Ovary (tissue), 10 donors: ENCODE measurements at regions of chr11 and their contacts with region 1.

Region 1: GRCh38 chr11:56799691-56800210 is 51.3 kb upstream of the OR9G4 start:
- DNase-seq: no peak
- H3K4me3 ChIP-seq: no peak overlapping the region
- H3K27ac ChIP-seq: no peak overlapping the region
- H3K4me1 ChIP-seq: no peaks in the 10 kb centered on the region
- H3K27me3 ChIP-seq: no peaks in the 10 kb centered on the region
- CTCF ChIP-seq: no peak
- EP300 ChIP-seq: no peak
- POLR2A ChIP-seq: no peak

Region 2: DNA sequence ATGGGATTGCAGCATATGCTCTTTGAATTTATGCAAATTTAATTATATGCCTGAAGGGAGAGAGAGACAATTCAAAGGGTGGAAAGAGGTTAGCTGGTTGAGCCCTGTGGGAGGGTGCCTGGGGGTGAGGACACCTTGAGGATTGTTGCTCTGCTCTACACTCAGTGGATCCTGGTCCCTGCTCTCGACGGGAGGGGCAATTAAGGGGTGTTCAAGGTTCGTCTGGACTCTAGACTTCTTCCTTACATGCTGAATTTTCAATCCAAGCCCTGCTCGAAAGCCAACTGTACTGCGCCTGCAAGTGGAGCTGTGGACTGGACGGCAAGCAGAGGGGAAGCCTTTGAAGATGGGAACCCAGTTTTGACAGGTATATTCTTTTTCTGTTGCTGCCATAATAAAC is 241.2 kb before region 1 on chr11:
- intact Hi-C with region 1: no loop called
- DNase-seq: no peak
- H3K4me3 ChIP-seq: no peak overlapping the region
- H3K27ac ChIP-seq: no peak overlapping the region
- H3K4me1 ChIP-seq: no peaks in the 10 kb centered on the region
- H3K27me3 ChIP-seq: no peaks in the 10 kb centered on the region
- CTCF ChIP-seq: no peak
- EP300 ChIP-seq: no peak
- POLR2A ChIP-seq: no peak

Region 3: DNA sequence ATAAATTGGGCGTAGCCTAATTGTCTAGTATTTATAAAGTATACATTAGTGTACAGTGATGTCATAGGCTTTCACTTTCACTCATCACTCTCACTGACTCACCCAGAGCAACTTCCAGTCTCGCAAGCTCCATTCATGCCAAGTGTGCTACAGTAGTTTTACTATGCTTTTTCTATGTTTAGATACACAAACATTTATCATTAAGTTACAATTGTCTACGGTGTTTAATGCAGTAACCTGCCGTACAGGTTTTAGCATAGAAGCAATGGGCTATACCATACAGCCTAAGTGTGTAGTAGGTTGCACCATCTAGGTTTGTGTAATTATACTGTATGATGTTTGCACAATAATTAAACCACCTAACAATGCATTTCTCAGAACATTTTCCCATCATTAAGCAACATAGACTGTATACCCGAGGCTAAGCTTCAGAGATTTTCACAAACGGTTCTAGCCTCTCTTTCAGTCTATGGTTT is 83.3 kb before region 1 on chr11:
- intact Hi-C with region 1: no loop called
- DNase-seq: no peak
- H3K4me3 ChIP-seq: no peak overlapping the region
- H3K27ac ChIP-seq: no peak overlapping the region
- H3K4me1 ChIP-seq: no peaks in the 10 kb centered on the region
- H3K27me3 ChIP-seq: no peaks in the 10 kb centered on the region
- CTCF ChIP-seq: no peak
- EP300 ChIP-seq: no peak
- POLR2A ChIP-seq: no peak

Region 4: GRCh38 chr11:56855217-56855616 is 55.5 kb after region 1 on chr11:
- intact Hi-C with region 1: loop called in 1 of 4 experiments (anchors 10 kb)
- DNase-seq: no peak
- H3K4me3 ChIP-seq: no peak overlapping the region
- H3K27ac ChIP-seq: no peak overlapping the region
- H3K4me1 ChIP-seq: no peaks in the 10 kb centered on the region
- H3K27me3 ChIP-seq: no peaks in the 10 kb centered on the region
- CTCF ChIP-seq: no peak
- EP300 ChIP-seq: no peak
- POLR2A ChIP-seq: no peak

Region 5: GRCh38 chr11:57379732-57380131 is 580.0 kb after region 1 on chr11:
- intact Hi-C with region 1: no loop called
- DNase-seq: no peak
- H3K4me3 ChIP-seq: no peak overlapping the region
- H3K27ac ChIP-seq: no peak overlapping the region
- H3K4me1 ChIP-seq: no peaks in the 10 kb centered on the region
- H3K27me3 ChIP-seq: no peaks in the 10 kb centered on the region
- CTCF ChIP-seq: no peak
- EP300 ChIP-seq: no peak
- POLR2A ChIP-seq: no peak